PC-3 (cell line): ENCODE measurements at regions of chr15 and their contacts with region 1.

Region 1: GRCh38 chr15:66700802-66701421 is 1.1 kb upstream of the SMAD6 start:
- DNase-seq: peak; percentile 94
- ATAC-seq: peak; percentile 53
- H3K4me3 ChIP-seq: peak overlapping the region; percentile 86
- H3K27ac ChIP-seq: peak overlapping the region; percentile 29; the same call in 1 of the 2 replicates
- H3K4me1 ChIP-seq: peaks cover 21% of the 10 kb centered on the region
- H3K27me3 ChIP-seq: no peaks in the 10 kb centered on the region
- CTCF ChIP-seq: no peak

Region 2: GRCh38 chr15:65516997-65517865 is 1183.7 kb before region 1 on chr15 and contains the start of gene DPP8:
- CTCF ChIA-PET with region 1: no interaction called
- POLR2A ChIA-PET with region 1: interaction called, 21 read pairs
- intact Hi-C with region 1: no loop called
- DNase-seq: peak; percentile 87
- ATAC-seq: peak; percentile 98
- H3K4me3 ChIP-seq: peak within 1 kb of the TSS; percentile 99
- H3K27ac ChIP-seq: peak within 1 kb of the TSS; percentile 71
- H3K4me1 ChIP-seq: peaks cover 13% of the 10 kb centered on the region
- H3K27me3 ChIP-seq: no peaks in the 10 kb centered on the region
- CTCF ChIP-seq: peak; percentile 90
- total RNA-seq, gene DPP8: 20.0 and 20.6 TPM in 2 replicates

Region 3: GRCh38 chr15:66619151-66619903 is 81.6 kb before region 1 on chr15:
- CTCF ChIA-PET with region 1: interaction called, 9 read pairs
- POLR2A ChIA-PET with region 1: no interaction called
- intact Hi-C with region 1: loop called (anchors 1 kb)
- DNase-seq: peak; percentile 80
- ATAC-seq: peak; percentile 72
- H3K4me3 ChIP-seq: no peak overlapping the region
- H3K27ac ChIP-seq: no peak overlapping the region
- H3K4me1 ChIP-seq: peaks cover 19% of the 10 kb centered on the region
- H3K27me3 ChIP-seq: no peaks in the 10 kb centered on the region
- CTCF ChIP-seq: peak; percentile 79

Region 4: DNA sequence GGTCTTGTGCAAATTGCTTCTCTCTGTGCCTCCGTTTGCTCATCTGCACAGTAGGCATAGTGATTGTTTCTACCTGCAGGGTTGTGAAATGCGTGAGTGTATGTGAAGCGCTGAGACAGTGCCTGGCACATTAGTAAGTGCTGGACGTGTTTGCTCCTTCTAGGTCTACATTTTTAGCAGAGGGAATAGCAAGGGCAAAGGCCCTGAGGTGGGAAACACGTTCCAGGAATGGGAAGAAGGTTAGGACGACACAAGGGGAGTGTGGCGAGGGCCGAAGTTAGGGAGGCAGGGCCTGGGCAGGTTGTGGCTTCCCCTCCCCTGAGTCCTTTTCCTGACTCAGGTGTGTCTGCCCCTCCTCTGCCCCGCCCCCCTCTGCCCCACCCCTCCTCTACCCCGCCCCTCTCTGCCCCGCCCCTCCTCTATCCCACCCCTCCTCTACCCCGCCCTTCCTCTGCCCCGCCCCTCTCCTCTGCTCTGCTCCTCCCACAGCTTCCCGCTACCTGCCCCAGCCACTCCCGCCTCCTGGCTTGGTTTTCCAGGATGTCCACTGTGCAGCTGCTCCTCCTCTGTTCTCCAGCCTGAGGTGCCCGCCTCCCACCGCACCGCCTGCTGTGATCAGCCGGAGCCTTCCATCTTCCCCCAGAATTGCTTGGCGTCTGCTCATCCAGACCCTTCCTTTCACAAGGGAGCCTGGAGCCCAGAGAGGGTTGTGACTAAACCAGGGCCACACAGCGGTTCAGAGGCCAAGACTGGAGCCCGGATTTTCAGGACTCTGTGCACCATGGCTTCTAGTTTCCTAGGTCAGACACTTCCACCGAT is 29.9 kb before region 1 on chr15:
- CTCF ChIA-PET with region 1: no interaction called
- POLR2A ChIA-PET with region 1: no interaction called
- intact Hi-C with region 1: loop called (anchors 1 kb)
- DNase-seq: peak; percentile 81
- ATAC-seq: peak; percentile 98
- H3K4me3 ChIP-seq: peak overlapping the region; percentile 55
- H3K27ac ChIP-seq: peak overlapping the region; percentile 17; the same call in 1 of the 2 replicates
- H3K4me1 ChIP-seq: peaks cover 11% of the 10 kb centered on the region
- H3K27me3 ChIP-seq: no peaks in the 10 kb centered on the region
- CTCF ChIP-seq: no peak

Region 5: DNA sequence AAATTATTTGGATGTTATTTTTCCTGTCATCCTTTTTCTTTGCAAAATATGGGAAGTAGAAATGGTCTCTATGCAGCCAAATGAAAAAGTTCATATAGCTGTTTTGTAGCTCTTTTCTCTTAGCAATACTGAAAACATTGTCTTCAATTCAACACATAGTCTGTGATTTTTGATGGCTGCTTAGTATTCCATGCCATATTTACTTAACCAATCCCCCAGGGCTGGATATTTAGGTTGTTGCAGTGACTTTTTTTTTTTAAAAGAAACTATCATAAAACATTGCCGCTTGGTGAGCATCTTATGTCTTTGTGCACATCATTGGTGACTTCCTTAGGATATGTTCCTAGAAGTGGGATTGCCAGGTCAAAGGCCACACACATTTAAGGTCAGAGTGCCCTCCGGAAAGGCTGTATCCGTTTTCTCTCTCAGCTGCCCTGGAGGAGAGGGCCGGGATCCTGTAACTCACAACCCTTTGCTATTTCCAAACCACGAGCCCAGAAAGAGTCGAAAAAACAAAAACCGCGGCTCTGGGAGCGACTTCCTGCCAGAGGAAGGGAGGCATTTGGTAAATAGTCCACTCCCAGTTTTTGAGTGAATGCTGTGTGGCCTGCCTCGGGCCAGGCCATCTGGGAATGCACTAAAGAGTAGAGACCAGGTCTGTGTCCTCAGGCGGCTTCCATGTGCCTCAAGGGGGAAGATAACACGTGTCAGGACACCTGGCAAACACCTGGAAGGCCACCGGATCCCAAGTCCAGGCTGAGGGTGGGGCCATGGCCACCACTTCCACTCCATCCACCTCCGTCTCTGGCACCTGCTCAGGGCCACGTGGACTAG is 43.0 kb after region 1 on chr15:
- CTCF ChIA-PET with region 1: no interaction called
- POLR2A ChIA-PET with region 1: interaction called, 7 read pairs
- intact Hi-C with region 1: loop called (anchors 2 kb)
- DNase-seq: peak; percentile 78
- ATAC-seq: peak; percentile 59
- H3K4me3 ChIP-seq: no peak overlapping the region
- H3K27ac ChIP-seq: peak overlapping the region; percentile 85
- H3K4me1 ChIP-seq: peaks cover 63% of the 10 kb centered on the region
- H3K27me3 ChIP-seq: no peaks in the 10 kb centered on the region
- CTCF ChIP-seq: no peak

Region 6: DNA sequence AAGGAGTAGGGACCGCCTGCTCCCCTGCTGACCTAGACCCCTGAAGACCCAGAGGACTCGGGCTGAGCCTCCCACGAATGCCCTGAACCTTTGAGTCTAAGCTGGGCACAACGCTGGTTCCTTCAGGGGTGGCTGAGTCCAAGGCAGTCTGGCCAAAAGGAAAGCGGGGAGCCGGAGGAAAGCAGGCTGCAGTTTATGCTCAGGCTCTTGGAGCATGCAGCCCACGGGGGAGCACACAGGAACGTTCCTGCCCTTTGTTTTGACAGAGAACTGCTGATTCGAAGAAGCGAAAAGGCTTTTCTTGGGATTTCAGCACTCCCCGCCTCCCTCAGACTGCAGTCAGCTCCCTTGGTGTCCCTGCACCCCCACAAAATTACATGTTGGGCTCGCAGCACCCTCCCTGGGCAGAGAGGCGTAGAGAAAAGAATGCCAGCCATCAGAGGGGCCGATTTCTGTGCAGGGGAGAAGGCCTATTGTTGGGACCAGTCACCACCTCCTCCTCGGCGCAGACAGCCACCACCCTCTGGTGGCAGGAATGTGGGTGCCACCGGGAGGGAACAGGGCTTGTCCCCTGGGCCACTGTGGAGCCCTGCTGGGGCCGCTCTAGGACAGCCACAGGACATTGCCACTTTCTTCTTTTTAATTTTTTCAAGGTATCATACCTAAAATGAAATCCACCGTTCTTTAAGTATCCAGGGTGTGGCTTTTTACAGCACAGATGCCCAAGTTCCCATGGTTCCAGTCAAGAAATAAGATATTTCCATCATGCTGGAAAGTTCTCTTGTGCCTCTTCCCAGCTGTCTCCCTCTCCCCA is 73.3 kb after region 1 on chr15:
- CTCF ChIA-PET with region 1: no interaction called
- POLR2A ChIA-PET with region 1: interaction called, 3 read pairs
- intact Hi-C with region 1: loop called (anchors 2 kb)
- DNase-seq: peak; percentile 88
- ATAC-seq: peak; percentile 87
- H3K4me3 ChIP-seq: no peak overlapping the region
- H3K27ac ChIP-seq: no peak overlapping the region
- H3K4me1 ChIP-seq: peaks cover 34% of the 10 kb centered on the region
- H3K27me3 ChIP-seq: no peaks in the 10 kb centered on the region
- CTCF ChIP-seq: peak; percentile 94

Region 7: DNA sequence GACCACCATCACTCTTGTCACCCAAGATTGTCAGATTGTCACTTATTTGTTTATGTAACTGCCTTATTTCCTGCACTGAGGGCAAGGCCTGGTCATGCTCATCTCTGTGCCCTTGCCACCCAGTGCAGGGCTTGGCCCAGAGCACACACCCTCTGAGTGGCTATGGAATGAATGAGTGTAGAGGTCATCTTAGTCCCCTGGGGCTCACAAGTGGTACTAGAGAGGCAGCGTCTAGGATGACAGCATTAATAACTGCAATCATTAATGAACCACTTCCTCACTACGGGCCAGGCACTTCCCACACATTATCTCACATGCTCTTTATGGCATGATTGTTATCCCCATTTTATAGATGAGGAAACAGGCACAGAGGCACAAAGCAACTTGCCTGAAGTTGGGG is 118.2 kb after region 1 on chr15:
- CTCF ChIA-PET with region 1: no interaction called
- POLR2A ChIA-PET with region 1: no interaction called
- intact Hi-C with region 1: no loop called
- DNase-seq: peak; percentile 17
- ATAC-seq: peak; percentile 68
- H3K4me3 ChIP-seq: no peak overlapping the region
- H3K27ac ChIP-seq: no peak overlapping the region
- H3K4me1 ChIP-seq: peaks cover 29% of the 10 kb centered on the region
- H3K27me3 ChIP-seq: no peaks in the 10 kb centered on the region
- CTCF ChIP-seq: no peak